T-cell (primary cell): ENCODE measurements at regions of chr11 and their contacts with region 1.

Region 1: DNA sequence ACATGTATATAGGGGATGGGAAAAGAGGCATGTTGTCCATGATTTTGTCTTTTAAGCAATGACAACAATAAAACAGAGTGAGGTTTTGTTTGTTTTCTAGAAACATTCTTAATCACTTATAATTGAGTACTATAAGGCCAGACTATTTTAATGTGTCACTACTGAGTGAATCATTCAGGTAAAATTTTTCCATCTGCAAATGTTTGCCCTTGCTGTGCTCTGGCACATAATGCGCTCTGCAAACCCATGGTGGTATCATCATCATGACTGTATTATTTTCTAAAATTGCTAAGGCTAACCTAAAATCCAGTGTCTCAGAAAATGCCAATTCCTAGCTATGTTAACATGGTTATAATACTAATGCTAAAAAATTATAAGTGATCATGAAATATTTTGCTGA is 261.2 kb downstream of the CADM1 start:
- DNase-seq: no peak
- ATAC-seq: no peak
- H3K4me3 ChIP-seq: no peak overlapping the region
- H3K4me3 Mint-ChIP-seq: no peak overlapping the region
- H3K27ac ChIP-seq: no peak overlapping the region
- H3K27ac Mint-ChIP-seq: no peak overlapping the region
- H3K4me1 ChIP-seq: no peaks in the 10 kb centered on the region
- H3K4me1 Mint-ChIP-seq: no peaks in the 10 kb centered on the region
- H3K27me3 ChIP-seq: no peaks in the 10 kb centered on the region
- H3K27me3 Mint-ChIP-seq: peaks cover 0 to 4% of the 10 kb centered on the region in 2 donors

Region 2: DNA sequence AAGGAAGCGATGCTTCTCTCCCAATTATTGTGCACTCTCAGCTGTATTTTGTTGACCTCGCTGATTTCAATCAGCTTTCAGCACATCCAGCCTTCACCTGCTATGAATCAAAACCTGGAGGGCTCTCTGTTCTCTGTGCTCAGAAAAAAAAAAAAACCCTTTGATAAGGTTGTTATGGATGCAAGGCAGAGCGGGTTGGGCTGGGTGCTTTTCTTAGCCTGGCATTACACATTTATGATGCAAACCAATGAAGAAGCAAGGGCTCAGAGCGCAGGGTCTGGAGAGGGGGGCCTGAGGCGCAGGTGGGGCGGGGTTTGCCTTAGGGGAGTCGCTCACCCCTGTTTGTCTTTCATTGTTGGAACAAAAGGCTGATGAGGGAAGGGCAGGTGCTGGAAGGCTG is 347.3 kb after region 1 on chr11:
- CTCF ChIA-PET with region 1: interaction called in 1 of 2 experiments, 11 read pairs
- POLR2A ChIA-PET with region 1: no interaction called
- DNase-seq: no peak
- ATAC-seq: no peak
- H3K4me3 ChIP-seq: no peak overlapping the region
- H3K4me3 Mint-ChIP-seq: no peak overlapping the region
- H3K27ac ChIP-seq: no peak overlapping the region
- H3K27ac Mint-ChIP-seq: no peak overlapping the region
- H3K4me1 ChIP-seq: no peaks in the 10 kb centered on the region
- H3K4me1 Mint-ChIP-seq: no peaks in the 10 kb centered on the region
- H3K27me3 ChIP-seq: peaks cover 0 to 4% of the 10 kb centered on the region in 2 experiments
- H3K27me3 Mint-ChIP-seq: peaks cover 0 to 8% of the 10 kb centered on the region in 2 donors